ENCODE measurements at regions of chr5 and their contacts with region 1.

Region 1: GRCh38 chr5:141412854-141413539 is at the start of gene PCDHGA10:
- DNase-seq: peak; percentile 78
- ATAC-seq: peak; percentile 43
- H3K4me3 Mint-ChIP-seq: peak within 1 kb of the TSS; percentile 94
- H3K27ac Mint-ChIP-seq: peak within 1 kb of the TSS; percentile 51
- H3K4me1 Mint-ChIP-seq: peaks cover 27% of the 10 kb centered on the region
- H3K27me3 Mint-ChIP-seq: peaks cover 28% of the 10 kb centered on the region
- CTCF ChIP-seq: peak; percentile 71
- total RNA-seq, gene PCDHGA10: 10.7 to 11.9 TPM (median 11.0 TPM) in 3 replicates

Region 2: GRCh38 chr5:141186897-141187512 is 226.0 kb before region 1 on chr5 and contains the start of gene PCDHB9:
- CTCF ChIA-PET with region 1: interaction called, 16 read pairs
- POLR2A ChIA-PET with region 1: no interaction called
- DNase-seq: peak; percentile 71
- ATAC-seq: peak; percentile 58
- H3K4me3 Mint-ChIP-seq: peak within 1 kb of the TSS; percentile 21
- H3K27ac Mint-ChIP-seq: no peak within 1 kb of the TSS; the same call in 1 of the 2 replicates
- H3K4me1 Mint-ChIP-seq: peaks cover 15% of the 10 kb centered on the region
- H3K27me3 Mint-ChIP-seq: peaks cover 4% of the 10 kb centered on the region; the same call in 1 of the 2 replicates
- CTCF ChIP-seq: peak; percentile 49; the same call in 1 of the 2 replicates
- total RNA-seq, gene PCDHB9: 1.6 to 2.3 TPM (median 1.7 TPM) in 3 replicates

Region 3: DNA sequence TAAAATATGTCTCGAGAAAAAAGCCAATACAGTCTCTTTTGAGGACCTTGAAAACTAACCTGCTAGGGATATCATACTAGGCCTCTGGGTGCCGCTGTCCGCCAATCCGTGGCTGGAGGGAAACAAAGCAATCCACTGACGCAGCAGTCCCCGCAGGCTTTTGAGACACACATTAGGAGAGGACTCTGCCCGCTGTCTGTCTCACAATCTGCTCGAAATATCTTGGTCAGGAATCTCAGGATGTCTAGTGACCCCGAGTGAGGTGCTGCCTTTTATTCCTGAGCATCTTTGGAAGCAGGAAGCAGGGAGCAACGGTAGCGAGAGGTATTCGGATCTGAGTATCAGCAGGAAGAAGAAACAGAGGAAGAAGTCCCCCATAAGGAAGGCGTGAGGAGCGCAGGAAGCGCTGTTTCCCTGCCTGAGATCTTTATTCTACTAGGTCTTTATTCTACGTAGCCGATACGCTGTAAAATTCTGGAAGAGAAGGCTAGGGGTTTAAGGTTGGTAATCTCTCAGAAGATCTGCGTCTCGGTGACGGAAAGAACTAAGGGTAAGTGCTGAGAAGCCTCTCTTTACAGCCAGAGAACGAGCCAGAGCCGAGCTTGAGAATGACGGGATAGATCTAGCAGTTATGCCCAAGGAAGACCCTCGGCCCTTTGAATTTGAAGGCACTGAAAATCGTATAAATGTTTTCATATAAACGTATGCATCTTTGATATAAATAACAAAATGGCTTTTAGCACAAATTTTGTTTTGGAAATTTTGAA is 86.7 kb before region 1 on chr5:
- CTCF ChIA-PET with region 1: interaction called, 14 read pairs
- POLR2A ChIA-PET with region 1: no interaction called
- DNase-seq: peak; percentile 76
- ATAC-seq: peak; percentile 91
- H3K4me3 Mint-ChIP-seq: peak overlapping the region; percentile 90
- H3K27ac Mint-ChIP-seq: peak overlapping the region; percentile 98
- H3K4me1 Mint-ChIP-seq: peaks cover 7% of the 10 kb centered on the region
- H3K27me3 Mint-ChIP-seq: peaks cover 12% of the 10 kb centered on the region
- CTCF ChIP-seq: peak; percentile 43; the same call in 1 of the 2 replicates

Region 4: DNA sequence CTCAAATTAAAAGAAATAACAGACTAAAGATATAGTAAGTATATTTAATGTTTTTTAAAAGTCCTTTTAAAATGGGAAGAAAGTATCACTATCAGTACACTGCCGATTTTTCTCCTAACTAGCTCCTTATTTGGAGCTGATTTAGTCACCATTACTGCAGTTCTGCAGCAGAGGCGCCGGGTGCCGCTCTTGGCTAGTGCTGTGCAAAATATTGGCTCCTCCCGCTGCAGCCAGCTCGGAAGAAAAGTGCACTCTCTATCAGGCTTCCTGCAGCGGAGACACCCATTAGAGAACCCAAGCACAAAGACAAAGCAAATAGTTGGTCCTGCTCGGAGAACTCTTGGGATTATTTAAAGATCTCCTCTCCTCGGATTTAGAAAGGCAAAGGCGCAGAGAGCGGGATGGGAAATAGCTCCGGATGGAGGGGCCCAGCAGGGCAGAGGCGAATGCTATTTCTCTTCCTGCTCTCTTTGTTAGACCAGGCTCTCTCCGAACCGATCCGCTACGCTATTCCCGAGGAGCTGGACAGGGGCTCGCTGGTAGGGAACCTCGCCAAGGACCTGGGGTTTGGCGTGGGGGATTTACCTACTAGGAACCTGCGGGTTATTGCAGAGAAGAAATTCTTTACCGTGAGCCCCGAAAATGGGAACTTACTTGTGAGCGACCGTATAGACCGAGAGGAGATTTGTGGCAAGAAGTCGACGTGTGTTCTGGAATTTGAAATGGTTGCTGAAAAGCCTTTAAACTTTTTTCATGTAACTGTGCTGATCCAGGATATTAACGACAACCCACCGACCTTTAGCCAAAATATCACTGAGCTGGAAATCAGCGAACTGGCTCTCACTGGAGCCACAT is 42.8 kb before region 1 on chr5 and contains the start of gene PCDHGB3:
- CTCF ChIA-PET with region 1: interaction called, 37 read pairs
- POLR2A ChIA-PET with region 1: no interaction called
- DNase-seq: peak; percentile 56
- ATAC-seq: peak; percentile 95
- H3K4me3 Mint-ChIP-seq: peak within 1 kb of the TSS; percentile 61
- H3K27ac Mint-ChIP-seq: peak within 1 kb of the TSS; percentile 91
- H3K4me1 Mint-ChIP-seq: peaks cover 5% of the 10 kb centered on the region
- H3K27me3 Mint-ChIP-seq: peaks cover 8% of the 10 kb centered on the region
- CTCF ChIP-seq: no peak
- total RNA-seq, gene PCDHGB3: 3.3 to 4.2 TPM (median 3.5 TPM) in 3 replicates

Region 5: DNA sequence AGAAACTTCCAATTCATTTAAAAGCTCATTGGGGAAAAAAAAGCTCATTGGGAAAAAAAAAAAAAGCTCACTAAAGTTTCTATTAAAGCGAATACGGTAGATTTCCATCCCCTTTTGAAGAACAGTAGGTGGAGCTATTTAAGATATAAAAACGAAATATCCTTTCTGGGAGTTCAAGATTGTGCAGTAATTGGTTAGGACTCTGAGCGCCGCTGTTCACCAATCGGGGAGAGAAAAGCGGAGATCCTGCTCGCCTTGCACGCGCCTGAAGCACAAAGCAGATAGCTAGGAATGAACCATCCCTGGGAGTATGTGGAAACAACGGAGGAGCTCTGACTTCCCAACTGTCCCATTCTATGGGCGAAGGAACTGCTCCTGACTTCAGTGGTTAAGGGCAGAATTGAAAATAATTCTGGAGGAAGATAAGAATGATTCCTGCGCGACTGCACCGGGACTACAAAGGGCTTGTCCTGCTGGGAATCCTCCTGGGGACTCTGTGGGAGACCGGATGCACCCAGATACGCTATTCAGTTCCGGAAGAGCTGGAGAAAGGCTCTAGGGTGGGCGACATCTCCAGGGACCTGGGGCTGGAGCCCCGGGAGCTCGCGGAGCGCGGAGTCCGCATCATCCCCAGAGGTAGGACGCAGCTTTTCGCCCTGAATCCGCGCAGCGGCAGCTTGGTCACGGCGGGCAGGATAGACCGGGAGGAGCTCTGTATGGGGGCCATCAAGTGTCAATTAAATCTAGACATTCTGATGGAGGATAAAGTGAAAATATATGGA is 17.5 kb after region 1 on chr5 and contains the start of gene PCDHGA12:
- CTCF ChIA-PET with region 1: interaction called, 13 read pairs
- POLR2A ChIA-PET with region 1: no interaction called
- DNase-seq: no peak
- ATAC-seq: peak; percentile 43; the same call in 1 of the 2 replicates
- H3K4me3 Mint-ChIP-seq: no peak within 1 kb of the TSS
- H3K27ac Mint-ChIP-seq: no peak within 1 kb of the TSS
- H3K4me1 Mint-ChIP-seq: no peaks in the 10 kb centered on the region
- H3K27me3 Mint-ChIP-seq: no peaks in the 10 kb centered on the region
- CTCF ChIP-seq: no peak
- total RNA-seq, gene PCDHGA12: 1.6 to 2.1 TPM (median 1.9 TPM) in 3 replicates

Region 6: DNA sequence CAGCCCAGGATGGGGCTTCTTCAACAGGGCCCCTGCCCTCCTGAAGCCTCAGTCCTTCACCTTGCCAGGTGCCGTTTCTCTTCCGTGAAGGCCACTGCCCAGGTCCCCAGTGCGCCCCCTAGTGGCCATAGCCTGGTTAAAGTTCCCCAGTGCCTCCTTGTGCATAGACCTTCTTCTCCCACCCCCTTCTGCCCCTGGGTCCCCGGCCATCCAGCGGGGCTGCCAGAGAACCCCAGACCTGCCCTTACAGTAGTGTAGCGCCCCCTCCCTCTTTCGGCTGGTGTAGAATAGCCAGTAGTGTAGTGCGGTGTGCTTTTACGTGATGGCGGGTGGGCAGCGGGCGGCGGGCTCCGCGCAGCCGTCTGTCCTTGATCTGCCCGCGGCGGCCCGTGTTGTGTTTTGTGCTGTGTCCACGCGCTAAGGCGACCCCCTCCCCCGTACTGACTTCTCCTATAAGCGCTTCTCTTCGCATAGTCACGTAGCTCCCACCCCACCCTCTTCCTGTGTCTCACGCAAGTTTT is 99.5 kb after region 1 on chr5:
- CTCF ChIA-PET with region 1: interaction called, 87 read pairs
- POLR2A ChIA-PET with region 1: interaction called, 10 read pairs
- DNase-seq: peak; percentile 99
- ATAC-seq: peak; percentile 82
- H3K4me3 Mint-ChIP-seq: peak overlapping the region; percentile 87
- H3K27ac Mint-ChIP-seq: no peak overlapping the region
- H3K4me1 Mint-ChIP-seq: peaks cover 61% of the 10 kb centered on the region
- H3K27me3 Mint-ChIP-seq: no peaks in the 10 kb centered on the region
- CTCF ChIP-seq: peak; percentile 99

Region 7: GRCh38 chr5:141573489-141574121 is 160.6 kb after region 1 on chr5:
- CTCF ChIA-PET with region 1: no interaction called
- POLR2A ChIA-PET with region 1: no interaction called
- DNase-seq: no peak
- ATAC-seq: 0 out of 2 replicates have a peak, but pooled peaks have one; percentile 24
- H3K4me3 Mint-ChIP-seq: no peak overlapping the region
- H3K27ac Mint-ChIP-seq: no peak overlapping the region
- H3K4me1 Mint-ChIP-seq: peaks cover 5% of the 10 kb centered on the region
- H3K27me3 Mint-ChIP-seq: no peaks in the 10 kb centered on the region
- CTCF ChIP-seq: no peak

Measured in WTC11 (cell line).